Aorta (tissue), 5 donors: ENCODE measurements at regions of chr2 and their contacts with region 1.

Region 1: DNA sequence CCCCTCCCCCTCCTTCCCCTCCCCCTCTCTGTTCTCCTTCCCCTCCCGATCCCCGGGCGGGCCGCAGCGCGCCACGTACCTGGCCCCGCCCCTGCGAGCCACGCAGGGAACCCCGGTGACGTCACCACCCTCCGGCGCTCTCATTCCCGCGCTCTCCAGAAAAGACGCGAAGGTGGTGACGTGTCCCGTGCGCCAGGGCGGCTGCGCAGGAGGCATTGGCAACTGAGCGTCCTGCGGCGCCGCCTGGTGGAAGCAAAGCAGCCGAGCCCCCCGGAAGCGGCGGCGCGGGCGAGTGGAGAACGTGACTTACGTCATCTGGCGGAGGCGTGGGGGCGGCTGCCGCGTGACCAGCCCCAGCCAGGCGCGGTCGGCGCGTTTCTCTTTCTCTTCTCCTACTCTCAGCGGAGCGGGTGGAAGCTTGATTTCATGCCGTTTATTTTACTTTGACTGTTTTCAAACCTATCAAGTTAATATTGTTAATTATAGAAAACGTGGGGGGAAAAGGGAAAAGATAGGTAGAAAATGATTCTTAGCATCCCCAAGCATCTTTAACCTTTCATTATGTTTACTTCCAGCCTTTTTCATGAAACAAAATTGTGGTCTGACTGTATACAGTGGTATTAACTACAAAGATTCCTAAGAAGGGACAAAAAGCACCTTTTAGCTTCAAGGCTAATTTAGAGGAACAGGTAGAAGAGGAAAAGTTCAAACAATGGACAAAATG is 48.1 kb downstream of the C2orf42 start:
- DNase-seq: peak; percentile 100
- ATAC-seq: peak; percentile 95
- H3K4me3 ChIP-seq: peak overlapping the region; percentile 42 to 63
- H3K27ac ChIP-seq: peak overlapping the region; percentile 78 to 92
- H3K4me1 ChIP-seq: no peaks in the 10 kb centered on the region
- H3K27me3 ChIP-seq: no peaks in the 10 kb centered on the region

Region 2: DNA sequence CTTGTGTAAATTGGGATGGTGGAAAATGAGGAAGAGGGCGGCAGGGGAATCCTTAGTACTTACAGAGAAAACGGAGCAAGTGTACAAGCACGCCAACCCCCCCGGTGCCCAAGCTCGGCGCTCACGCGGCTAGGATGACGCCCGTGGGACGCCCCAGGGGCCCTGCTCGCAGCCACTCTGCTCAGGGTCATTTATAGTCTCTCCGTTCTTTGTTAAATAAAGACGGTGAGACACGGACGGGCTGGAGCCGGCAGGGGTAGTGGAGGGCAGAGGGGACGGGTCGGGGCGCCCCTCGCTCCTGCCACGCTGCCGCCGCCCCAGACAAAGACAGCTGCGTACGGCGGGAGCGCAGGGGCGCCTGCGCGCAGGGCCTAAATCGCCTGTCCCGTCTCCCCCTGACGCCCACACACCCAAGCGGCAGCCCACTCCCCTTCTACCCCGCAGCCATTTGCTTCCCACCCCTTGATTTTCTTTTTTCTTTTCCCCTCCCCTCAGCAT is 17.7 kb before region 1 on chr2:
- intact Hi-C with region 1: loop called in 1 of 2 experiments (anchors 1 kb)
- DNase-seq: peak; percentile 84 to 89
- ATAC-seq: peak; percentile 82
- H3K4me3 ChIP-seq: peak overlapping the region; percentile 12 to 52
- H3K27ac ChIP-seq: peak overlapping the region; percentile 76 to 100
- H3K4me1 ChIP-seq: no peaks in the 10 kb centered on the region
- H3K27me3 ChIP-seq: no peaks in the 10 kb centered on the region